CD4-positive, alpha-beta T cell (primary cell): ENCODE measurements at regions of chr3 and their contacts with region 1.

Region 1: DNA sequence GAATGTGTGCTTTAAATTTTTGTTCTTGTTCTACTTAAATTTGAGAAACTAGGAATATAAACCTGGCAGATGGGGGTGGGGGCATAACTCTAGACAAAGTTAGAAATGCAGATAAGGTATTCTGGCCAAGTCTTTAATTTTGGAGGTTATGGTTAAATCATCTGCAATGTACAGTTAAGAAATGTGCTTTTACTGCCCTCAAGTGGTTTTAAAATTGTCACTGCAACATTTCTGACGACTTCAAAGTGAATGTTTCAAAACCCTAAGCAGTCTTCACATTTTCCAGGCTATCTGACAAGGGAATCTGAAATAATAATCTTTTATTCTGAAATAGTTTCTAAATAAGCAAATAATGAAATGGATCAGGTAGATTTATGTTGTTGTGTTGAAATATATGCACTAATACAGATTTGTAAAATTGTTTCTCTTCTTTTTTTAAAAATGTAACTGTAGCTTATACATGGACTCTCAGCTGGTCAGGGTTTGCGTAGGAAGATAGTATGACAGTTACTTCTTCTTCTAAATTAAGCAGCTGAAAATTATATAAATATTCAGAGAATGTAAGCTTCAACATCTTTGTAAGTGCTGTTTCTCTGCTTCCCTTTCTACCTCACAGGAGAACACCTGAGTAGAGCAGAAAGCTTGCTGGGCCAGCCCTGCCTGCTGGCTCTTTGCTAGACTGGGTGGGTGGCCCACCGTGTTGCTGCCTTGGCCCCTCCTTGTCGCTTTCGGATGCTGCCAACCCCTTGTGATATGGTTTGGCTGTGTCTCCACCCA is 45.0 kb downstream of the SUCNR1 start:
- DNase-seq: peak in 3 of 14 experiments; percentile 49 to 59 (median 54)
- ATAC-seq: peak; percentile 34
- H3K4me3 ChIP-seq: no peak overlapping the region
- H3K4me3 Mint-ChIP-seq: no peak overlapping the region
- H3K27ac ChIP-seq: no peak overlapping the region
- H3K27ac Mint-ChIP-seq: no peak overlapping the region
- H3K4me1 ChIP-seq: no peaks in the 10 kb centered on the region
- H3K4me1 Mint-ChIP-seq: no peaks in the 10 kb centered on the region
- H3K27me3 ChIP-seq: no peaks in the 10 kb centered on the region
- H3K27me3 Mint-ChIP-seq: no peaks in the 10 kb centered on the region
- CTCF ChIP-seq: peak; percentile 68

Region 2: DNA sequence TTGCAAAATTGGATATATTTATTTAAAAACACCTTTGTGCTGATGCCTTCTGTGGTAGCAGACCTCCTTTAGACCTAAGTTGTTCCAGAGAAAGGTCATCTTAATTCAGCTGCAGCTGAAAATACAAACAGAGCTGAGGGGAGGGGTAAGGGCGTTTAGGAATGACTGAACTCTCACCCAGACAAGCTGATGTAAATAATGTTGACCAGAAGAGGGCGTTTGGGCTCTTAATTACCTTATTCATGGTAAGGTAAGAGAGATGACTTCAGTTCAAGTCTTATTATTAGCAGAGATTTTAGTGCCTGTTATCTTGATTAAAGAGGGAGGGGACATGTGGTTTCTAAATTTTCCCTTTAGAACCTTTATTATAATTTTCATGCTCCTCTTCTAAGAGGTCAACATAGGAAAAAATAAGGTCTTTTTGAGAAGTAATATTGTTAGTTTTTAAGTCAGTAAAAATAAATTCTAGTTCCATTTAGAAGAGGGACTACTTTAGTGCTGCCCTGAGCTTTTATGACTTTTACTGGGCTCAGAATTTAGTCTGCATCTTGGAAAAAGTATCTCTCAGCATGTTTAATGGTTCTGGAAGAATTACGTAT is 761.7 kb before region 1 on chr3:
- CTCF ChIA-PET with region 1: no interaction called
- POLR2A ChIA-PET with region 1: no interaction called
- intact Hi-C with region 1: loop called in 1 of 2 experiments (anchors 5 kb)
- DNase-seq: peak in 5 of 14 experiments; percentile 10 to 76 (median 63)
- ATAC-seq: peak; percentile 74
- H3K4me3 ChIP-seq: no peak overlapping the region
- H3K4me3 Mint-ChIP-seq: no peak overlapping the region
- H3K27ac ChIP-seq: no peak overlapping the region
- H3K27ac Mint-ChIP-seq: no peak overlapping the region
- H3K4me1 ChIP-seq: no peaks in the 10 kb centered on the region
- H3K4me1 Mint-ChIP-seq: no peaks in the 10 kb centered on the region
- H3K27me3 ChIP-seq: peaks cover 0 to 3% of the 10 kb centered on the region in 2 experiments
- H3K27me3 Mint-ChIP-seq: peaks cover 4% of the 10 kb centered on the region
- CTCF ChIP-seq: peak; percentile 66

Region 3: DNA sequence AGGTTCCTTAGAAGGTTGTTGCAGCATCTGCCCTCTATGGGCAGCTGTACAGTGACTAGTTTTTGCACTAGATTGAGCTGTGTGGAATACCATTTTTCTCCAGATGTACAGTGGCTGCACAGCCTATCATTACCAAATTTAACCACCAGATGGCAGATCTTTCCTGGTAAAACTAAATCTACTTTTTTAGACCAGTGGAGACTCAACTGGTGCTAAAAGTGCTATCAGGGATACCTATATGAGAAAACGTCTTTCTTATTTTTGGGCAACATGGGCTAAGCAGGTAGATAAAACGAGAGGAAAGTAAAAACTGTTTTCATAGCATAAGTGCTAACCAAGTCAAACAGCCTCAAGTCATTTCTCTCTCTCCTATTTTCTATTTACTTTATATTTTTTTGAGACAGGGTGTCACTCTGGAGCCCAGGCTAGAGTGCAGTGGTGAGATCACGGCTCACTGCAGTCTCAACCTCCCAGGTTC is 478.8 kb before region 1 on chr3:
- CTCF ChIA-PET with region 1: no interaction called
- POLR2A ChIA-PET with region 1: no interaction called
- intact Hi-C with region 1: loop called in 1 of 2 experiments (anchors 2 kb)
- DNase-seq: peak in 4 of 14 experiments; percentile 4 to 58 (median 44)
- ATAC-seq: peak; percentile 46
- H3K4me3 ChIP-seq: no peak overlapping the region
- H3K4me3 Mint-ChIP-seq: no peak overlapping the region
- H3K27ac ChIP-seq: no peak overlapping the region
- H3K27ac Mint-ChIP-seq: no peak overlapping the region
- H3K4me1 ChIP-seq: no peaks in the 10 kb centered on the region
- H3K4me1 Mint-ChIP-seq: no peaks in the 10 kb centered on the region
- H3K27me3 ChIP-seq: no peaks in the 10 kb centered on the region
- H3K27me3 Mint-ChIP-seq: peaks cover 4% of the 10 kb centered on the region
- CTCF ChIP-seq: peak; percentile 73

Region 4: GRCh38 chr3:151468284-151468917 is 450.0 kb before region 1 on chr3:
- CTCF ChIA-PET with region 1: no interaction called
- POLR2A ChIA-PET with region 1: no interaction called
- intact Hi-C with region 1: loop called (anchors 1 to 5 kb)
- DNase-seq: peak in 10 of 14 experiments; percentile 7 to 71 (median 14)
- ATAC-seq: no peak
- H3K4me3 ChIP-seq: no peak overlapping the region
- H3K4me3 Mint-ChIP-seq: no peak overlapping the region
- H3K27ac ChIP-seq: no peak overlapping the region
- H3K27ac Mint-ChIP-seq: no peak overlapping the region
- H3K4me1 ChIP-seq: no peaks in the 10 kb centered on the region
- H3K4me1 Mint-ChIP-seq: no peaks in the 10 kb centered on the region
- H3K27me3 ChIP-seq: no peaks in the 10 kb centered on the region
- H3K27me3 Mint-ChIP-seq: peaks cover 9% of the 10 kb centered on the region
- CTCF ChIP-seq: peak; percentile 81

Region 5: GRCh38 chr3:152497457-152497856 is 579.0 kb after region 1 on chr3:
- CTCF ChIA-PET with region 1: no interaction called
- POLR2A ChIA-PET with region 1: no interaction called
- intact Hi-C with region 1: no loop called
- DNase-seq: no peak
- ATAC-seq: no peak
- H3K4me3 ChIP-seq: no peak overlapping the region
- H3K4me3 Mint-ChIP-seq: no peak overlapping the region
- H3K27ac ChIP-seq: no peak overlapping the region
- H3K27ac Mint-ChIP-seq: no peak overlapping the region
- H3K4me1 ChIP-seq: no peaks in the 10 kb centered on the region
- H3K4me1 Mint-ChIP-seq: peaks cover 6% of the 10 kb centered on the region
- H3K27me3 ChIP-seq: no peaks in the 10 kb centered on the region
- H3K27me3 Mint-ChIP-seq: no peaks in the 10 kb centered on the region
- CTCF ChIP-seq: no peak